Naive thymus-derived CD8-positive, alpha-beta T cell (primary cell): ENCODE measurements at regions of chr12 and their contacts with region 1.

Region 1: DNA sequence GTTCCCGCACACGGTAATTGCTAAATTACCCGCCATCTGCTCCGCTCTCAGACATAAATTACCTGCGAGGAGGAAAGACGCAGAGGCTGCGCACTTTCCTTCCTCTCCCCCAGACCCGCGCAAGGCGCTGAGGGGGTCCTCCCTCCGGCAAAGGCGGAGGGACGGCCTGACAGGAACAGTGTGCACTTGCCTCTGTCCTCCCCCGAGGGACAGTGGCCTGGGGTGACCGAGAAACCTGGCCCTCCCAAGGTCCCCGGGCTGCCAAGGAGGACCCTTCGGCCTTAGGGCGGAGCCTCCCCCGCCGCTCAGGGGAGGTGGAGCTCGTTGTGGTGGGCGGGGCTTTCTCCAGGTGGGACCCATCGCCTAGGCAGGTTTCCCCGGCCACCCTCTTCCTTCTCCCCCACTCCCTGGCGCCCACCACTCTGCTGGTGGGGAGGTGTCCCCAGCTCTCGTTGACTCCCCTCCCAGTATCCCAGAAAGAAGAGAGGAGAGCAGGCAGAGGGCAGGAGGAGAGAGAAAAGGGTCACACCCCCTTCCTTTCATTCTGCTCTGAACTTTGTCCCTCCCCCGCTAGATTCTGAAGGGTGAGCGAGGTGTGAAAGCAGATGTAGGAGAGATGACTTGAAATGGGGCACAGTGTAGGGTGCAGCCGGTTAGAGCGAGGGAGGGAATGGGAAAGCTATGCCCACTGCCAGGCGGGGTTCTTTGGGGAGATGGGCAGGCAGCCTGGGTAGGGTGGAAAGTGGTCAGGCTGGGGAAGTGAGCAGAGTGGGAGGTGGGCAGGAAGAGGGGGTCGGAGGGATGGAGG is 11.4 kb upstream of the CALCOCO1 start:
- DNase-seq: peak; percentile 17 to 71 (median 46)
- ATAC-seq: peak; percentile 65 to 77
- H3K4me3 Mint-ChIP-seq: peak overlapping the region in 8 of 10 donors; percentile 67 to 91 (median 82)
- H3K27ac Mint-ChIP-seq: peak overlapping the region in 3 of 10 donors; percentile 6 to 69 (median 12)
- H3K4me1 Mint-ChIP-seq: peaks cover 13 to 32% (median 26%) of the 10 kb centered on the region in 4 donors
- H3K27me3 Mint-ChIP-seq: peaks cover 16 to 57% (median 38%) of the 10 kb centered on the region in 5 donors

Region 2: GRCh38 chr12:53727310-53728041 is 11.1 kb before region 1 on chr12 and contains the start of gene CALCOCO1:
- POLR2A ChIA-PET with region 1: interaction called, 16 read pairs
- DNase-seq: peak; percentile 90 to 98 (median 97)
- ATAC-seq: peak; percentile 97 to 98
- H3K4me3 Mint-ChIP-seq: peak within 1 kb of the TSS; percentile 87 to 99 (median 94)
- H3K27ac Mint-ChIP-seq: peak within 1 kb of the TSS; percentile 83 to 96 (median 94)
- H3K4me1 Mint-ChIP-seq: peaks cover 17 to 40% (median 26%) of the 10 kb centered on the region in 4 donors
- H3K27me3 Mint-ChIP-seq: peaks cover 0 to 3% (median 0%) of the 10 kb centered on the region in 5 donors
- polyA plus RNA-seq, gene CALCOCO1: 52.3 to 55.5 (median 55.4) TPM